IMR-90 (cell line): ENCODE measurements at regions of chr11 and their contacts with region 1.

Region 1: DNA sequence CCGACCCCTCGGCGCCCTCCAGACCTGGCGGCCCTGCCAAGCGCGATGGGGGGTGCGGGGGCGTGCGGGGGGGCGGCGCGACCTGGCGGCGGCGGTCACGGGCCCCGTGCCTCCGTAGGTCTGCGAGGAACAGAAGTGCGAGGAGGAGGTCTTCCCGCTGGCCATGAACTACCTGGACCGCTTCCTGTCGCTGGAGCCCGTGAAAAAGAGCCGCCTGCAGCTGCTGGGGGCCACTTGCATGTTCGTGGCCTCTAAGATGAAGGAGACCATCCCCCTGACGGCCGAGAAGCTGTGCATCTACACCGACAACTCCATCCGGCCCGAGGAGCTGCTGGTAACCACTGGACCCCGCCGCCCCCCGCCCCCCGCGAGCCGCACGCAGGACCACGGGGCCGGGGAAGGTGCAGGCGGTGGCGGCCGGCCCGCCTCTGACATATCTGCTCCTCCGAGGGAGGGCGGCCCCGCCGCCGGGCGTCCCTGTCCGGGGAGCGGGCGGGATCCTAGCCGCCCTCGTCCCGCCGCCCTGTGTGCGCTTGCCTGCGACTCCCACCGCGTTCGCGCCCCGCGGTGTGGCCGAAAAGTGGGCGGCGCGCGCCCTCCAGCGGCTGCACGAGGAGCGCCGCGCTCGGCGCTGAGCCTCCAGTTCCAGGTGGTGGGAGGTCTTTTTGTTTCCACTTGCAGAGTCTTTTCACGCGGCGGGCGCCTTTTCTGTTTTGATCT is 2.1 kb downstream of the CCND1 start:
- DNase-seq: peak; percentile 74
- ATAC-seq: peak; percentile 13
- H3K4me3 ChIP-seq: peak overlapping the region; percentile 98
- H3K27ac ChIP-seq: peak overlapping the region; percentile 98
- H3K4me1 ChIP-seq: peaks cover 21% of the 10 kb centered on the region
- H3K27me3 ChIP-seq: no peaks in the 10 kb centered on the region
- CTCF ChIP-seq: peak; percentile 86
- POLR2A ChIP-seq: peak; percentile 61
- RAD21 ChIP-seq: peak; percentile 92

Region 2: DNA sequence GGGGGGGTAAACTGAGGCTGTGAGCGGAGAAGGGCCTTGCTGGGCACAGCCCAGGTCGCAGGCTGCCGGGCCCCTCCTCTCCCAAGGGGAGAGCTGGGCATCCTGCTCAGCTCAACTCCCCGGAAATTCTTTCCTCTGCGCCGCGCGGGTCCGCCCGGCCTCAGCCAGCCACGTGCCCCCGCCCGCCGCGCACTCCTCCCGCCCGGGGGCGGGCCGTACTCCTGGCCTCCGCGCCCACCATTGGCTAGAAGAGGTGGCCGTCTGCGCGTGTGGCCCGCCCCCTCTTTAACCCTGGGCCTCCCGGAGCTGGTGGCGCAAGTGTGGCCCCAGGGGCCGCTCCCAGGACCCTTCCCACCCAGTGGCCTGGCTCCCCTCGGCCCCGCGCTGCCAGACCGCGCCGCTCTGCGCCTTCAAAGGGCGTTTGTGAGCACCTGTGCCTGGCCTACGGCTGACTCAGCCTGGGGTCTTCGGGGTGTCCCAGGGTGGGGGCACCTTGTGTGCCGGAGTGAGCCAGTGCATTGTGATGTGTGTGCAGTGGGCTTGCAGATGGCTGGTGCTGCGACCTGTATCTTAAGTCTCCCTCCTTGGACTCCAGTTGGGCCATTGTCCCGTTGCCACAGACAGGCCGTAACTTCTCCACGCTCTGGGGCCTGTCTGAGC is 632.0 kb before region 1 on chr11:
- CTCF ChIA-PET with region 1: no interaction called
- POLR2A ChIA-PET with region 1: no interaction called
- dilution Hi-C with region 1: no loop called
- in situ Hi-C with region 1: no loop called
- intact Hi-C with region 1: loop called (anchors 1 kb)
- DNase-seq: peak; percentile 77
- ATAC-seq: peak; percentile 52
- H3K4me3 ChIP-seq: peak overlapping the region; percentile 68
- H3K27ac ChIP-seq: peak overlapping the region; percentile 99
- H3K4me1 ChIP-seq: peaks cover 51% of the 10 kb centered on the region
- H3K27me3 ChIP-seq: no peaks in the 10 kb centered on the region
- CTCF ChIP-seq: no peak
- POLR2A ChIP-seq: no peak; the same call in 1 of the 2 replicates
- RAD21 ChIP-seq: no peak

Region 3: GRCh38 chr11:69131644-69132300 is 511.3 kb before region 1 on chr11:
- CTCF ChIA-PET with region 1: interaction called, 6 read pairs
- POLR2A ChIA-PET with region 1: no interaction called
- dilution Hi-C with region 1: no loop called
- in situ Hi-C with region 1: no loop called
- intact Hi-C with region 1: loop called (anchors 1 kb)
- DNase-seq: peak; percentile 70
- ATAC-seq: peak; percentile 92
- H3K4me3 ChIP-seq: no peak overlapping the region
- H3K27ac ChIP-seq: no peak overlapping the region
- H3K4me1 ChIP-seq: no peaks in the 10 kb centered on the region
- H3K27me3 ChIP-seq: no peaks in the 10 kb centered on the region
- CTCF ChIP-seq: peak; percentile 86
- POLR2A ChIP-seq: no peak
- RAD21 ChIP-seq: peak; percentile 86

Region 4: GRCh38 chr11:69215784-69216415 is 427.2 kb before region 1 on chr11:
- CTCF ChIA-PET with region 1: no interaction called
- POLR2A ChIA-PET with region 1: no interaction called
- dilution Hi-C with region 1: no loop called
- in situ Hi-C with region 1: no loop called
- intact Hi-C with region 1: loop called (anchors 2 kb)
- DNase-seq: peak; percentile 71
- ATAC-seq: peak; percentile 91
- H3K4me3 ChIP-seq: no peak overlapping the region
- H3K27ac ChIP-seq: peak overlapping the region; percentile 26
- H3K4me1 ChIP-seq: peaks cover 15% of the 10 kb centered on the region
- H3K27me3 ChIP-seq: peaks cover 9% of the 10 kb centered on the region; the same call in 1 of the 2 replicates
- CTCF ChIP-seq: no peak
- POLR2A ChIP-seq: no peak
- RAD21 ChIP-seq: no peak; the same call in 1 of the 2 replicates

Region 5: GRCh38 chr11:69352715-69353325 is 290.3 kb before region 1 on chr11:
- CTCF ChIA-PET with region 1: no interaction called
- POLR2A ChIA-PET with region 1: interaction called, 4 read pairs
- dilution Hi-C with region 1: no loop called
- in situ Hi-C with region 1: no loop called
- intact Hi-C with region 1: loop called (anchors 5 kb)
- DNase-seq: peak; percentile 99
- ATAC-seq: peak; percentile 90
- H3K4me3 ChIP-seq: no peak overlapping the region
- H3K27ac ChIP-seq: peak overlapping the region; percentile 85
- H3K4me1 ChIP-seq: peaks cover 16% of the 10 kb centered on the region
- H3K27me3 ChIP-seq: no peaks in the 10 kb centered on the region
- CTCF ChIP-seq: no peak
- POLR2A ChIP-seq: no peak
- RAD21 ChIP-seq: peak; percentile 36

Region 6: GRCh38 chr11:69497221-69497787 is 145.8 kb before region 1 on chr11:
- CTCF ChIA-PET with region 1: no interaction called
- POLR2A ChIA-PET with region 1: no interaction called
- dilution Hi-C with region 1: no loop called
- in situ Hi-C with region 1: no loop called
- intact Hi-C with region 1: loop called (anchors 1 kb)
- DNase-seq: peak; percentile 95
- ATAC-seq: peak; percentile 99
- H3K4me3 ChIP-seq: no peak overlapping the region
- H3K27ac ChIP-seq: peak overlapping the region; percentile 90
- H3K4me1 ChIP-seq: peaks cover 12% of the 10 kb centered on the region
- H3K27me3 ChIP-seq: no peaks in the 10 kb centered on the region
- CTCF ChIP-seq: no peak
- POLR2A ChIP-seq: no peak
- RAD21 ChIP-seq: peak; percentile 31